ENCODE measurements at regions of chr5 and their contacts with region 1.

Region 1: DNA sequence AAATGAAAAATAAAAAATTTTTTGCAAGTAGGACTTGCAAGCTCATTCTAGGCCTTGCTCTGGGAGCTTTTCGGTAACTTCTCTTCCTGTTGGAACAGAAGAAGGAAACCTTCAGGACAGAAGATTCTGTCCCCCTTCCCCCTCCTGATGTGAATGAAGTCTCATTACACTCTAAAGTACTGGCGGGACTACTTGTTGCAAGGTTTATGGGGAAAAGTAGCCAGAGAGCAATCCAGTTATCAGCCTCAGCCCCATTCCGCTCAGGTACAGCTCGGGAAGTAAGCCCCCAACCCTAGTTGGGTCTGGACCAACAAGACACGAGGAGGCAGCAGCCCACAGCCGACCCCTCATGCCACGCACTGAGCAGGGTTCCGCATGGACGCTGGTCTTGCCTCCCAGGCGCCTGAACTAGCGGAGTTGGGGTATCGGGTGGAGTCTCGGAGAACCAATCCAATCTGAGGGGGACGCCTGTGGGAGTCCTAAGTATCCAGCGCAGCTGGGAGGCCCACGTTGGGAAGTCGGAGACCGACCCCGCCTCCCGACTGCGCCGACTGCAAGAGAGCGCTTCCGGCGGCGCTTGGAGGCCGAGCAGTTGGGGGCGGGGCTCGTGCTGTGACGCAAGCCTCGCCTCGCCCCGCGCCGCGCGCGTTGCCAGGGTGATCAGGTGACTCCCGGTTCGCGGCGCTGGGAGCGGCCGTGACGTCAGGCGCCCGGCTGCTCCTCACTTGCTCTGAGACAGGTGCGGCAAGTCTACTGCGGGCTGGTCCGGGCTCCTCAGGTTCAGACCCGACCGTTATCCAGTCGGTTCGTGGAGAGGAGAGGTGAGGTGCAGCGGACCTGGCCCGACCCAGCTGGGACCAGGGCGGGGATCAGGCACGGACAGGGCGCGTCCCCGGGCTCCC is at the start of gene CYSTM1:
- DNase-seq: peak; percentile 89
- ATAC-seq: peak; percentile 84
- H3K4me3 ChIP-seq: peak within 1 kb of the TSS; percentile 84 to 96 (median 89)
- H3K27ac ChIP-seq: peak within 1 kb of the TSS; percentile 89
- H3K4me1 ChIP-seq: peaks cover 61% of the 10 kb centered on the region
- H3K27me3 ChIP-seq: no peaks in the 10 kb centered on the region; a peak in 1 of 5 replicates
- CTCF ChIP-seq: no peak
- EP300 ChIP-seq: no peak
- POLR2A ChIP-seq: peak; percentile 74 to 81; a peak in 3 of 4 replicates
- RAD21 ChIP-seq: 0 out of 2 replicates have a peak, but pooled peaks have one; percentile 15
- total RNA-seq, gene CYSTM1: 40.0 and 52.7 TPM in 2 replicates

Region 2: DNA sequence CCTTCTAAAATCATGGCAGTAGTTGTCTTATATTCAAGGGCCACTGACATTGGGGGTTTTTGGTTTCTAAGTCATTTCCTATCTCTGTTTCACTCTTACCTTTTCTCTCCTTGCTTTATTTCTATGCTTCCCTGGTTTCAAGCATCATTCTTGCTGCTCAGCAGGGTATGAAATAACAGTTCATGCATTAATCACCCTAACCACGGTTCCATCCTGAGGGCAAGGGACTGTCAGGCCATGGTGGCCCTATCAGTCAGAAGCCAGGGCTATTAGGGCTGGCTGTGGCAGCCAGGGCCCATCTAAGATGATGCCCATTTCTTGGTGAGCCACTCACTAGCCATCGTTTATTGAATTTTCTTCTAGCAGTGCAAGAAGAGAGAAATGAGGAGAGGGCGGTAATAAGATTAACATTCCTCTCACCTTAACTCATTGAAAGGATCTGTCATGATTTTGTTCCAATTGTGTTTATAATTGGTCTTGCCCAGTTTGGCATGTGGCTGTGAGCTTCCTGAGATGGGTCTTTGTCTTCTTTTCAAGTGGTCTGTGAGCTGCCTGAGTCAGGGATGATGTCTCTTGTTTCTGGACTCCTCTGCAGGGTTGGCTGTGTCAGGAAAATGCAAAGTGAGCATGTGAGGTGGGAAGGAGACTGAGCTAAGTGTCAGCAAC is 45.4 kb after region 1 on chr5:
- CTCF ChIA-PET with region 1: no interaction called
- POLR2A ChIA-PET with region 1: no interaction called
- in situ Hi-C with region 1: loop called (anchors 5 kb)
- intact Hi-C with region 1: loop called (anchors 5 kb)
- DNase-seq: no peak
- ATAC-seq: peak; percentile 9; the same call in 2 of the 3 replicates
- H3K4me3 ChIP-seq: peak overlapping the region in 2 of 3 experiments; percentile 13 to 15; a peak in 4 of 6 replicates
- H3K27ac ChIP-seq: peak overlapping the region; percentile 57
- H3K4me1 ChIP-seq: peaks cover 72% of the 10 kb centered on the region
- H3K27me3 ChIP-seq: no peaks in the 10 kb centered on the region
- CTCF ChIP-seq: no peak
- EP300 ChIP-seq: no peak
- POLR2A ChIP-seq: no peak
- RAD21 ChIP-seq: no peak

Region 3: GRCh38 chr5:140710899-140711552 is 536.3 kb after region 1 on chr5:
- CTCF ChIA-PET with region 1: no interaction called
- POLR2A ChIA-PET with region 1: no interaction called
- in situ Hi-C with region 1: no loop called
- intact Hi-C with region 1: loop called (anchors 10 kb)
- DNase-seq: peak; percentile 98
- ATAC-seq: peak; percentile 94
- H3K4me3 ChIP-seq: peak overlapping the region; percentile 59 to 86 (median 77)
- H3K27ac ChIP-seq: peak overlapping the region; percentile 92
- H3K4me1 ChIP-seq: peaks cover 24% of the 10 kb centered on the region
- H3K27me3 ChIP-seq: no peaks in the 10 kb centered on the region; a peak in 1 of 5 replicates
- CTCF ChIP-seq: no peak
- EP300 ChIP-seq: peak in 1 of 2 experiments; percentile 47; a peak in 1 of 4 replicates
- POLR2A ChIP-seq: peak; percentile 48 to 82
- RAD21 ChIP-seq: 0 out of 2 replicates have a peak, but pooled peaks have one; percentile 7